ENCODE measurements at regions of chr13 and their contacts with region 1.

Region 1: DNA sequence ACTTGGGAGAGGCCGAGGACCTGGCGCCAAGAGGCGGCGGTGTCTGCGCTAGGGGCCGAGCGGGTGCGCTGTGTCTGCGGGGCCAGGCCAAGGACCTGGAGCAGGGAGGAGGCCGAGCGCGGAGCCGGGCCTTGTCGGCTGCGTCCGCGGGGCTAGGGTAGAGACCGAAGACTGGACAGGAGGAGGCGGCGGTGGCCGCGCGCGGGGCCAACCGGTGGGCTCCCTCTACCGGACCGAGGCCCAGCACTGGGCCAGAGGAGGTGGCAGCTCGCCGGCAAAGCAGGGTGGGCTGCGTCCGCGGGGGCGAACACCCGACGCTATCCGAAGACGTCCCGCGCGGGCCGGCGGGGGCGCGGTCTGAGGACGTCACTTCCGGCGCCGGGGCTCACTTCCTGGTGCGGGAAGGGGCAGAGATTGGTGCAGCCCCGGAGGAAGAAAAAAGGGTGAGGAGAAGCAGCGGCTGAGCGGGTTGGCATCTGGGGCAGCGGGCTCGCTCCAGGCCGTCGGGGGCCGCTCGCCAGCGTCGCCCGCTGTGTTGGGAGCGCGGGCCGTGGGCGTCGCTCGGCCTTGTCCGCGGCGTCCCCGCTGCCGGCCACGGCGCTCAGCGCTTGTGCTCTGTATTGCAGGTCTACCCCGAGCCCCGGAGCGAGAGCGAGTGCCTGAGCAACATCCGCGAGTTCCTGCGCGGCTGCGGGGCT is 38.3 kb downstream of the ARHGEF7 start:
- DNase-seq: peak; percentile 95
- ATAC-seq: peak; percentile 88
- H3K4me3 Mint-ChIP-seq: peak overlapping the region; percentile 92
- H3K27ac Mint-ChIP-seq: peak overlapping the region; percentile 90
- H3K4me1 Mint-ChIP-seq: peaks cover 28% of the 10 kb centered on the region
- H3K27me3 Mint-ChIP-seq: peaks cover 1% of the 10 kb centered on the region
- CTCF ChIP-seq: no peak

Region 2: GRCh38 chr13:111058776-111059506 is 94.5 kb before region 1 on chr13:
- CTCF ChIA-PET with region 1: no interaction called
- POLR2A ChIA-PET with region 1: no interaction called
- intact Hi-C with region 1: no loop called
- DNase-seq: no peak
- ATAC-seq: no peak
- H3K4me3 Mint-ChIP-seq: no peak overlapping the region
- H3K27ac Mint-ChIP-seq: no peak overlapping the region
- H3K4me1 Mint-ChIP-seq: no peaks in the 10 kb centered on the region
- H3K27me3 Mint-ChIP-seq: peaks cover 42% of the 10 kb centered on the region
- CTCF ChIP-seq: no peak

Region 3: GRCh38 chr13:111184458-111185401 is 31.3 kb after region 1 on chr13:
- CTCF ChIA-PET with region 1: interaction called, 5 read pairs
- POLR2A ChIA-PET with region 1: interaction called, 4 read pairs
- intact Hi-C with region 1: loop called (anchors 2 kb)
- DNase-seq: peak; percentile 70
- ATAC-seq: peak; percentile 74
- H3K4me3 Mint-ChIP-seq: peak overlapping the region; percentile 58
- H3K27ac Mint-ChIP-seq: peak overlapping the region; percentile 87
- H3K4me1 Mint-ChIP-seq: peaks cover 98% of the 10 kb centered on the region
- H3K27me3 Mint-ChIP-seq: no peaks in the 10 kb centered on the region
- CTCF ChIP-seq: no peak

Region 4: GRCh38 chr13:111202156-111202621 is 48.8 kb after region 1 on chr13:
- CTCF ChIA-PET with region 1: no interaction called
- POLR2A ChIA-PET with region 1: no interaction called
- intact Hi-C with region 1: no loop called
- DNase-seq: no peak
- ATAC-seq: no peak
- H3K4me3 Mint-ChIP-seq: no peak overlapping the region
- H3K27ac Mint-ChIP-seq: peak overlapping the region; percentile 45
- H3K4me1 Mint-ChIP-seq: peaks cover 55% of the 10 kb centered on the region
- H3K27me3 Mint-ChIP-seq: no peaks in the 10 kb centered on the region
- CTCF ChIP-seq: no peak

Region 5: GRCh38 chr13:111216166-111216960 is 62.9 kb after region 1 on chr13:
- CTCF ChIA-PET with region 1: interaction called, 6 read pairs
- POLR2A ChIA-PET with region 1: interaction called, 3 read pairs
- intact Hi-C with region 1: loop called (anchors 5 kb)
- DNase-seq: peak; percentile 71
- ATAC-seq: peak; percentile 87
- H3K4me3 Mint-ChIP-seq: no peak overlapping the region
- H3K27ac Mint-ChIP-seq: peak overlapping the region; percentile 16
- H3K4me1 Mint-ChIP-seq: peaks cover 20% of the 10 kb centered on the region
- H3K27me3 Mint-ChIP-seq: no peaks in the 10 kb centered on the region
- CTCF ChIP-seq: peak; percentile 52